Natural killer cell (primary cell): ENCODE measurements at regions of chr2 and their contacts with region 1.

Region 1: DNA sequence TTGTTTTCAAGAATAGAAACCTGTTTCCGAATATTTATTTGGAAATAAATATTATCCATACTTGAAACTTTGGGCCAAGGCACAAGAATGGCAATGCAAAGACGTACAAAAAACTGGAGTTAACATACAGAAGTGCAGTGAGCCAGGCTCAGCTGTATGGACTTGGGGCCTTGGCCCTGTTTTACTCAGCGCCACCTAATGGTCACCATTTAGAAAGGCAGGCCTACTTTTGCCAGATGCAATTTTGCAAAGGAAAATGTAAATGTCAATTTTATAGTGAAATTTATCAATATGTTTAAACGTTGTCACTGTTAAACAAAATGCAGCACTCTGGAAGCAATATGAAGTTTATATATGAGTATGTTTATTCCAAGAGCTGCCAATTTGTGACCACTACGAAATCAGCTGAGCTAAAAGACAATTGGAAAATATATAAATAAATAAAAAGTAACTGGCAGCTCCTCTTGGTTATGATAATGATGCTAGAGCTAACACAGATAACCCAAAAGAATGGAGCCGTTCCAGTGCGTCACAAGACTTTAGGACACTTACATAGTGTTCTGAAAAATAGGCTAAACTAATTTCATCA is 155.0 kb downstream of the ARHGAP15 start:
- DNase-seq: peak in 1 of 2 donors; percentile 78
- ATAC-seq: peak; percentile 72 to 91 (median 87)
- H3K4me3 ChIP-seq: no peak overlapping the region
- H3K4me3 Mint-ChIP-seq: no peak overlapping the region
- H3K27ac ChIP-seq: no peak overlapping the region
- H3K27ac Mint-ChIP-seq: no peak overlapping the region
- H3K4me1 ChIP-seq: peaks cover 3% of the 10 kb centered on the region
- H3K4me1 Mint-ChIP-seq: peaks cover 26% of the 10 kb centered on the region in 2 donors
- H3K27me3 ChIP-seq: no peaks in the 10 kb centered on the region
- H3K27me3 Mint-ChIP-seq: no peaks in the 10 kb centered on the region
- CTCF ChIP-seq: peak; percentile 89

Region 2: GRCh38 chr2:143034292-143035074 is 249.7 kb before region 1 on chr2:
- intact Hi-C with region 1: loop called (anchors 5 kb)
- DNase-seq: peak; percentile 26 to 89
- ATAC-seq: peak; percentile 99 to 100 (median 100)
- H3K4me3 ChIP-seq: no peak overlapping the region
- H3K4me3 Mint-ChIP-seq: no peak overlapping the region
- H3K27ac ChIP-seq: no peak overlapping the region
- H3K27ac Mint-ChIP-seq: no peak overlapping the region
- H3K4me1 ChIP-seq: no peaks in the 10 kb centered on the region
- H3K4me1 Mint-ChIP-seq: no peaks in the 10 kb centered on the region
- H3K27me3 ChIP-seq: no peaks in the 10 kb centered on the region
- H3K27me3 Mint-ChIP-seq: no peaks in the 10 kb centered on the region
- CTCF ChIP-seq: peak; percentile 100